ENCODE measurements at regions of chr11 and their contacts with region 1.

Region 1: GRCh38 chr11:122853971-122854446 is 15.7 kb downstream of the CRTAM start:
- DNase-seq: peak; percentile 75
- ATAC-seq: no peak
- H3K4me3 Mint-ChIP-seq: no peak overlapping the region
- H3K27ac Mint-ChIP-seq: no peak overlapping the region
- H3K4me1 Mint-ChIP-seq: peaks cover 60% of the 10 kb centered on the region
- H3K27me3 Mint-ChIP-seq: no peaks in the 10 kb centered on the region

Region 2: DNA sequence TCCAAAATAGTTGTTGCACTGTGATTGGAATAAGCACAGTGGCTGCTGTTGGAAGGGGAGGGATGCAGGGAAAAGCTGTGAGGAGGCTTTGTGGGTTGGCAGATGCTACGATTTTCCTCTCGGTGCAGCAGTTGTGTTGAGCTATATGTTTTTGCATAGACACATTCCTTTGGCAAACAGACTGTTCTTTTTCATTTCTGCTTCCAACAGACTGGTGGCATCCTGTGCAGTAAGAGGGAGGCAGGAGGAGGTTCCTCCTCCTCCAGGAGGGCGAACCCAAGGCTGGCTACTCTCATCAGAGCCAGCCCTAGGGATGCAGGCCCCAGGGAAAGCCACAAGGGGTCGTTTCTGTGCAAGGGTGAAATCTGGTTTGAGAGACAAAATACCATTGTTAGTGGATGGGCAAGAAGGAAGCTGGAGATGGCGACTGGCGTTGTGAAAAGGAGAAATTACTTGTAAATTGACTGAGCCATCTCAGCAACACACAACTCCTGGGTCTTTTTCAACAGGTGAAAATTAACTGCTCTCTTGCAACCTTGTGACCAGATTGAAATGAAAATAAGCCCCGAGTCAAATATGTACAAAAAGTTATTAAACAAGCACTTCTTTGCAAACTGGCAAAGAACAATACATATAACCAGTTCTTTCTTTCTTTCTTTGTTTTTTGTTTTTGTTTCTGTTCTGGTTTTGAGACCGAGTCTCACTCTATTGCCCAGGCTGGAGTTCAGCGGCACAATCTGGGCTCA is 225.0 kb before region 1 on chr11:
- CTCF ChIA-PET with region 1: interaction called, 66 read pairs
- POLR2A ChIA-PET with region 1: interaction called, 4 read pairs
- DNase-seq: peak; percentile 81
- ATAC-seq: peak; percentile 86
- H3K4me3 Mint-ChIP-seq: no peak overlapping the region
- H3K27ac Mint-ChIP-seq: no peak overlapping the region
- H3K4me1 Mint-ChIP-seq: peaks cover 33% of the 10 kb centered on the region
- H3K27me3 Mint-ChIP-seq: peaks cover 2% of the 10 kb centered on the region

Region 3: GRCh38 chr11:122781378-122782195 is 72.4 kb before region 1 on chr11:
- CTCF ChIA-PET with region 1: interaction called, 469 read pairs
- POLR2A ChIA-PET with region 1: no interaction called
- DNase-seq: peak; percentile 80
- ATAC-seq: peak; percentile 89
- H3K4me3 Mint-ChIP-seq: no peak overlapping the region
- H3K27ac Mint-ChIP-seq: no peak overlapping the region
- H3K4me1 Mint-ChIP-seq: peaks cover 33% of the 10 kb centered on the region
- H3K27me3 Mint-ChIP-seq: no peaks in the 10 kb centered on the region

Region 4: GRCh38 chr11:122808478-122808869 is 45.5 kb before region 1 on chr11:
- CTCF ChIA-PET with region 1: interaction called, 337 read pairs
- POLR2A ChIA-PET with region 1: interaction called, 7 read pairs
- DNase-seq: no peak
- ATAC-seq: no peak
- H3K4me3 Mint-ChIP-seq: no peak overlapping the region
- H3K27ac Mint-ChIP-seq: peak overlapping the region; percentile 58
- H3K4me1 Mint-ChIP-seq: peaks cover 64% of the 10 kb centered on the region
- H3K27me3 Mint-ChIP-seq: no peaks in the 10 kb centered on the region

Region 5: DNA sequence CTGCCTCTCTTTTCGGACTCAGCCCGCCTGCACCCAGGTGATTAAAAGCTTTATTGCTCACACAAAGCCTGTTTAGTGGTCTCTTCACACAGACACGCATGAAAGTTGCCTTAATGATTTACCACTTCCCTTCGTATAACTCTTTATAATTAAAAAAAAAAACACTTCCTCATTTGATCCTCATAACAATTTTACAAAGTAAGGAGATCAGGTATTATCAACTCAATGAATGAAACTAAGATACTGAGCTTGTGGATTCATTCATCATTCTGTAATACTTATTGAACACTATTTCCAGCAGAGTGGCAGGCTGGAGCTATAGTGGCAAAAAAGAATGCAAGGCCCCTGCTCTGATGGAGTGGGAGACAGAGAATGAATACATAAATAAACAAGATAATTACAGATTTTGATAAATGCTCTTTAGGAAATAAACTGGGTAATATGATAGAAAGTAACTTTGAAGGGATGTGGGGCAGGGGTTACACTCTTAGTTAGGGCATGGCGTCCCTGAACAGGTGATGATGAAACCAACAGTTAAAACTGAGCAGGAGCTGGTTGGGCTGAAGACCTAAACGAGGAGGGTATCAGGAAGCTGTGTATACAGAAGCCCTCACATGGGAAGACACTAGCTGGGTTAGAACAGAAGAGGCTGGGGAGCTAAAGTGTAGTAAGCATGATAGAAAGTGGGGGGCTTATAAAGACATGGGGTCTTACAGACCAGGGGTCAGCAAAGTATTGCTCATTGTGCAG is 21.1 kb before region 1 on chr11:
- CTCF ChIA-PET with region 1: interaction called, 194 read pairs
- POLR2A ChIA-PET with region 1: interaction called, 43 read pairs
- DNase-seq: no peak
- ATAC-seq: peak; percentile 33
- H3K4me3 Mint-ChIP-seq: no peak overlapping the region
- H3K27ac Mint-ChIP-seq: peak overlapping the region; percentile 44
- H3K4me1 Mint-ChIP-seq: peaks cover 24% of the 10 kb centered on the region
- H3K27me3 Mint-ChIP-seq: no peaks in the 10 kb centered on the region

Region 6: DNA sequence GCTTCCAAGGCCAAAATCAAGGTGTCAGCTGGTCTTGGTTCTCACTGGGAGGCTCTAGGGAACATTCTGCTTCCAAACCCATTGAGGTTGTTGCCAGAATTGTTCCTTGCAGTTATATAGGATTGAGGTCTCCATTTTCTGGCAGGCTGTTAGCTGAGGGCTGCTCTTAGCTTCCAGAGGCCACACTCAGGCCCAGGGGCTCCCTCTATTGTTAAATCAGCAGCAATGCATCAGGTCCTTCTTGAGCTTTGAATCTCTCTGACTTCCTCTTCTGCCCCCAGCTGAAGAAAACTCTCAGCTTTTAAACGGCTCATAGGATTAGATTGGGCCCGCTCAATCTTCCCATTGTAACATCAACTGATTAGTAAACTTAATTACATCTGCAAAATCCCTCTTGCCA is 167.0 kb after region 1 on chr11:
- CTCF ChIA-PET with region 1: interaction called, 45 read pairs
- POLR2A ChIA-PET with region 1: no interaction called
- DNase-seq: peak; percentile 53
- ATAC-seq: peak; percentile 74
- H3K4me3 Mint-ChIP-seq: no peak overlapping the region
- H3K27ac Mint-ChIP-seq: no peak overlapping the region
- H3K4me1 Mint-ChIP-seq: peaks cover 7% of the 10 kb centered on the region
- H3K27me3 Mint-ChIP-seq: peaks cover 16% of the 10 kb centered on the region